OCI-LY7 (cell line): ENCODE measurements at regions of chr3 and their contacts with region 1.

Region 1: GRCh38 chr3:9749645-9750555 is at the start of gene OGG1:
- DNase-seq: peak; percentile 99
- H3K4me3 ChIP-seq: peak within 1 kb of the TSS; percentile 81
- H3K27ac ChIP-seq: peak within 1 kb of the TSS; percentile 88
- H3K4me1 ChIP-seq: peaks cover 40% of the 10 kb centered on the region
- CTCF ChIP-seq: no peak
- total RNA-seq, gene OGG1: 98.9 and 121 TPM in 2 replicates

Region 2: DNA sequence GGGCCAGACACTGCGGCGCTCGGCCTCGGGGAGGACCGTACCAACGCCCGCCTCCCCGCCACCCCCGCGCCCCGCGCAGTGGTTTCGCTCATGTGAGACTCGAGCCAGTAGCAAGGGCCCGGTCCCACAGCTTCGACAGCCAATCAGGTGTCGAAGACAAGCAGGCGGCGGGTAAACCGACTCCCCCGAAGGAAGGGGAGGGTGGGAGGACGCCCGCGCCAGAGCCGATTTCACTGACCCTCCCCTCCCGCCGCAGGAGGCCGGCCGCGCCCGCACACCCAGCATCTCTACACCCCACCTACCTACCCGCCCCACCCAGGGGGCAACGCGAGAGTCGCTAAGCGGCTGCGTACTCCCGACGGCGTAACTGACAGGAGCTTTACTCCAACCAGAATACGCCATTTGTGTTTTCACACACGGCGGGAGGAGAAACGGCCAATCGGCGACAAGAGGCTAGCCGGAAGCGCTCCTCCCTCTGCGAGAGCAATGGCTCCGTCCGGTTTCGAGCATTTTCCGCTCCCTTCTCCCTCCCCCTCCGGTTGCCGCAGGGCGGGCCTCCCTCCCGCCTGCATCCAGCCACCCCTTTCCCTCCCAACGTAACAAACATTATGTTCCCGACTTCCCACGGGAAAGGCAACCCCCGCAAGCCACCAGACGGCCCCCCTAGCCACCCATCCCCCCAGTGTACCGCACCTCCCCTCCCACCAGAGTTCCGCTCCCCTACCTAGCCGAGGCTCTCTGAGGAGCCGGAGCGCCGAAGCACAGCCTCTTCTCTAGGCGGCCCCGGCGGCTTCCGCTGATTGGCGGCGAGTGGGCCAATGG is 353.0 kb before region 1 on chr3:
- CTCF ChIA-PET with region 1: no interaction called
- POLR2A ChIA-PET with region 1: interaction called, 7 read pairs
- intact Hi-C with region 1: loop called (anchors 2 kb)
- DNase-seq: peak; percentile 99
- H3K4me3 ChIP-seq: peak overlapping the region; percentile 96
- H3K27ac ChIP-seq: peak overlapping the region; percentile 87
- H3K4me1 ChIP-seq: peaks cover 59% of the 10 kb centered on the region
- CTCF ChIP-seq: no peak

Region 3: GRCh38 chr3:9731206-9732079 is 18.5 kb before region 1 on chr3 and contains the start of gene BRPF1:
- CTCF ChIA-PET with region 1: interaction called, 4 read pairs
- POLR2A ChIA-PET with region 1: interaction called, 16 read pairs
- intact Hi-C with region 1: loop called (anchors 1 kb)
- DNase-seq: peak; percentile 98
- H3K4me3 ChIP-seq: peak within 1 kb of the TSS; percentile 96
- H3K27ac ChIP-seq: peak within 1 kb of the TSS; percentile 60
- H3K4me1 ChIP-seq: peaks cover 28% of the 10 kb centered on the region
- CTCF ChIP-seq: no peak
- total RNA-seq, gene BRPF1: 29.2 and 31.9 TPM in 2 replicates

Region 4: GRCh38 chr3:9779721-9780457 is 30.0 kb after region 1 on chr3:
- CTCF ChIA-PET with region 1: no interaction called
- POLR2A ChIA-PET with region 1: interaction called, 3 read pairs
- intact Hi-C with region 1: loop called (anchors 1 kb)
- DNase-seq: peak; percentile 81
- H3K4me3 ChIP-seq: peak overlapping the region; percentile 33
- H3K27ac ChIP-seq: peak overlapping the region; percentile 84
- H3K4me1 ChIP-seq: peaks cover 52% of the 10 kb centered on the region
- CTCF ChIP-seq: no peak

Region 5: GRCh38 chr3:10389995-10390394 is 640.1 kb after region 1 on chr3:
- CTCF ChIA-PET with region 1: no interaction called
- POLR2A ChIA-PET with region 1: no interaction called
- intact Hi-C with region 1: loop called (anchors 10 kb)
- DNase-seq: peak; percentile 94
- H3K4me3 ChIP-seq: peak overlapping the region; percentile 41
- H3K27ac ChIP-seq: peak overlapping the region; percentile 97
- H3K4me1 ChIP-seq: peaks cover 96% of the 10 kb centered on the region
- CTCF ChIP-seq: no peak